Naive thymus-derived CD4-positive, alpha-beta T cell (primary cell): ENCODE measurements at regions of chr4 and their contacts with region 1.

Region 1: DNA sequence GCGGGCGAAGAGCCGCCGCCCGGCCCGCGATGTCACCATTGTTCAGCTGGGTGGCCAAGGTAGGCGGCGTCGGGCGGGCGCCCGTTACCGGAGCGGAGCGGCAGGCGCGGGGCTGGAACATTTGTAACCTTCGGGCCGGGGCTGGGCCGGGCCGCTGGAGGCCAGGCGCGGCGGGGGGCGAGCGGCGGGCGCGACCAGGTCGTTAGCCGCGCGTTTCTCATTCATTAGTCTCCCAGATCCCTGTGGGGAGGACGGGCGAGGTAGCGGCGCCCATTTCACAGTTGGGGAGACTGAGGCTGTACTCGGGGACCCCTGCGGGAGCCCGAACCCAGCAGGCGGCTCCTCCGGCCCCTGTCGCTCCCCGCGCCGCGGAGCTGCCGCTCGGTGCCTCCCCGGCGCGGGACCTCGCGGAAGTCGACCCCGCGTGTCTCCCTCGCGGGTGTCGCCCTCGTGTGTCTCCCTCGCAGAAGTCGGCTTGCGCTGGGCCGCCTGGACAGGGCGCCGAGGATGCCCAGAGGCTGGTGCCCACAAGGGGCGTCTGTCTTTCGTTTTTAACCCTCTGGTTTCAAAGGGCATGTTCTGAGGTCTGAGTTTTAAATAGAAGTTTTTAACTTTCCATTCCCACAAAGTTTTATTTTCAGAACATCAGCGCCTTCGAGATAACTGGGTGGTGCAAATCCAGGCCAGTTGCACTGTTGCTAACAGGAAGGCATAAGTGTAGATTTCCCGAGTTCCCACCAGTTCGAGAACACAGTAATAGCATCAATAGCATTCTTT is 17.5 kb downstream of the PTTG2 start:
- DNase-seq: peak; percentile 56 to 75 (median 70)
- ATAC-seq: peak; percentile 87
- H3K4me3 ChIP-seq: peak overlapping the region; percentile 69
- H3K4me3 Mint-ChIP-seq: peak overlapping the region; percentile 74 to 91 (median 84)
- H3K27ac ChIP-seq: peak overlapping the region; percentile 85
- H3K27ac Mint-ChIP-seq: peak overlapping the region; percentile 51 to 90 (median 78)
- H3K4me1 ChIP-seq: peaks cover 9 to 13% of the 10 kb centered on the region in 2 donors
- H3K4me1 Mint-ChIP-seq: peaks cover 14 to 40% (median 34%) of the 10 kb centered on the region in 7 donors
- H3K27me3 ChIP-seq: no peaks in the 10 kb centered on the region
- H3K27me3 Mint-ChIP-seq: no peaks in the 10 kb centered on the region

Region 2: DNA sequence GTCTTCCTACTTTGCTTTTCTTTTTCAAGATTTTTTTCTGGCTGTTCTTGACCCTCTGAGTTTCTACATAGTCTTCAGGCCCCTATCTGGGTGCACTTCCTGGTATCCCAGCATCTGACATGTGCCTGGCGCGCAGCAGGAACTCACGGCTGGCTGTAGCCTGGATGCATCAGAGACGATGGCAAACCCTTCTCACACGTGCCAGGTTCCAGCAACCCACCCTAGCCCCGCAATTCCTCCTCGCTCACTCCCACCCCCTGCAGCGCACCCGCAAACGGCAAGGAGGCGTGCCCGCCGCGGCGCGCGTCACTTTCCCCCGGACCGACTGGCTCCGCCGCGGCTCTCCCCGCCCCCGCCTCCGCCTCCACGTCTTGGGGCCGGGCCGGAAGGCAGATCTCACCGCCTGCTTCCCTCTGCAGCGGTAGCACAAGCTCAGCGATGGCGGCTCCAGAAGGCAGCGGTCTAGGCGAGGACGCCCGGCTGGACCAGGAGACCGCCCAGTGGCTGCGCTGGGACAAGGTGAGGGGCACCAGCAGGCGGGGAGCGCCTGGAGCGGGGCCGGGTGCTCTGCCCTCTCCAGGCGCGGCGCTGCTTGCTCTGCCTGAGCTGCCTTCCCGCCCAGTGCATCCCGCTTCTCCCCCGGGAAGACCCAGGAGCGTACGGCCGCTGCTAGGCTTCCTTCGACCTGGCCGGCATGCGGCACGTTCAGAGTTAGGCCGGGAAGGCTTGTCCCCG is 151.2 kb before region 1 on chr4 and contains the start of gene PGM2:
- CTCF ChIA-PET with region 1: no interaction called
- POLR2A ChIA-PET with region 1: interaction called, 7 read pairs
- intact Hi-C with region 1: loop called (anchors 1 kb)
- DNase-seq: peak; percentile 84 to 94 (median 90)
- ATAC-seq: peak; percentile 99
- H3K4me3 ChIP-seq: peak within 1 kb of the TSS; percentile 79
- H3K4me3 Mint-ChIP-seq: peak within 1 kb of the TSS; percentile 93 to 100 (median 98)
- H3K27ac ChIP-seq: peak within 1 kb of the TSS; percentile 80
- H3K27ac Mint-ChIP-seq: peak within 1 kb of the TSS; percentile 92 to 99 (median 96)
- H3K4me1 ChIP-seq: peaks cover 7 to 11% of the 10 kb centered on the region in 2 donors
- H3K4me1 Mint-ChIP-seq: peaks cover 34 to 70% (median 55%) of the 10 kb centered on the region in 7 donors
- H3K27me3 ChIP-seq: no peaks in the 10 kb centered on the region
- H3K27me3 Mint-ChIP-seq: peaks cover 0 to 5% (median 0%) of the 10 kb centered on the region in 5 donors
- total RNA-seq, gene PGM2: 14.4 to 35.2 (median 18.7) TPM

Region 3: DNA sequence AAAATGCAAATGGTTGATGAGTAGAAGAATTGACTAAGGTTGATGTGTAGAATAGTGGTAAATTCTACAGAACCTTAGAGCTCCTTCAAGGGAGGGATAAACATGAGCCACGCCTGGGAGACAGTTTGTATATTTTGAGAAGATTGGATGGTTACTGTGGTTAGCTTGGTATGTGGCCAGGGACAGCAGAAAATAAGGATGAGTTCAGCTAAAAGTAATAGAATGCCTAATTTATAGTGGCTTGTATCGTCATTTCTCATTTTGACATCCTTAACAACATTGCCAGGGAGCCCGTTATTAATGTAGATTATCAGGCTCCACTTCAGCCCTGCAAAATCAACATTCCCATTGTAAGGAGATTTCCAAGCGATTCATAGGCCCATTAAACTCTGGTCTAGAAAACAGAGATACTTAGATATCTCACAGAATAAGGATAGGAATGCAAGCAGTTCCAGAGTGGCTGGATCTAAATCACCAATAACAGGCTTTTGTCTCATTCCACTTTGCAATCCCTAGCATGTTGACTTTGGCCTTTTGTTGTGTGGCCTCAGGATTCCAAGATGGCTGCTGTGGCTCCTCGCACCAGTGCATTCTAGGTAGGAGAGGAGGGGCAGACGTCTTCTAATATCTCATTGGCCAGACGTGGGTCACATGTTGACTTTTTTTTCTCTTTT is 23.9 kb before region 1 on chr4:
- CTCF ChIA-PET with region 1: no interaction called
- POLR2A ChIA-PET with region 1: interaction called, 3 read pairs
- intact Hi-C with region 1: loop called in 1 of 2 experiments (anchors 1 kb)
- DNase-seq: no peak
- ATAC-seq: no peak
- H3K4me3 ChIP-seq: no peak overlapping the region
- H3K4me3 Mint-ChIP-seq: no peak overlapping the region
- H3K27ac ChIP-seq: no peak overlapping the region
- H3K27ac Mint-ChIP-seq: peak overlapping the region in 3 of 9 donors; percentile 19 to 74 (median 69)
- H3K4me1 ChIP-seq: no peaks in the 10 kb centered on the region
- H3K4me1 Mint-ChIP-seq: peaks cover 7 to 21% (median 10%) of the 10 kb centered on the region in 7 donors
- H3K27me3 ChIP-seq: no peaks in the 10 kb centered on the region
- H3K27me3 Mint-ChIP-seq: no peaks in the 10 kb centered on the region

Region 4: DNA sequence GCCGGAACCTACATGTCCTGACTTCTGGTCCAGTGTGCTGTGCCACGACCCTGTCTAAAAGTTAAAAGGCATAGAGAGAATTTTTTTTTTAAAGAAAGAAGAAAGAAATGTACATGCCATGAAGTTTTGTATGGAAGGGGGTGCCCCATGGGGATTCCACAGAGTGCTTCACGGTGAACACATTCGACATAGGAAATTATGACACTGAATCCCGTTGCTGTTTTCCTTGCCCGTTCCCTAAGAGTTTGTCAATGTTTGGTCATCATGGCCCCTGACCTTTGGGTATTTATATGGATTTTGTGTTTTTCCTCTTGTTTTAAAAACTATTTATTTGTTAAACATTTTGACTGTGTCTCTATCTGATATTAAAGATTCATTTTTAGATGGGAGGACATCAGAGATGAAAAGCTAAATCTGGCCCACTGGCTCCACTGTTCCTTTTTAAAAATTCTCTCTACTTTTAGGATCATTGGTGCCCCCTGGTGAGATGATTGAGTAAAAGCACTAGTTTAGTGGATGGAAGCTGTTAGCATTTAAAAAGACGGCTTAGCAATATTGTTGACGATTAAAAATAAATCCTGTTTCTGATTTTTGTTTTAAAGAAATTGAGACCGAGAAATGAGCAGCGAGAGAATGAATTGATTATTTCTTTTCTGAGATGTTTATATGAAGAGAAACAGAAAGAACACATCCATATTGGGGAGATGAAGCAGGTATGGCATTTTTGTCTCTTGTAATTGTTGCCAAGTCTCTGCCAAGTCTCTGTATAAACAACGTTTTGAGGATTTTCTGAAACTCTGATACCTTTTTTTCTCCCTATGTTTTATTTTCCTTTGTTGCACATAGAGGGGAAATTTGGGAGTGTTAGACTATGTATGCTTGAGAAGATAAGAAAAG is 57.6 kb after region 1 on chr4:
- CTCF ChIA-PET with region 1: no interaction called
- POLR2A ChIA-PET with region 1: no interaction called
- intact Hi-C with region 1: loop called (anchors 1 to 5 kb)
- DNase-seq: peak in 7 of 9 donors; percentile 29 to 66 (median 53)
- ATAC-seq: peak; percentile 68
- H3K4me3 ChIP-seq: no peak overlapping the region
- H3K4me3 Mint-ChIP-seq: no peak overlapping the region
- H3K27ac ChIP-seq: no peak overlapping the region
- H3K27ac Mint-ChIP-seq: no peak overlapping the region
- H3K4me1 ChIP-seq: no peaks in the 10 kb centered on the region
- H3K4me1 Mint-ChIP-seq: peaks cover 0 to 6% (median 0%) of the 10 kb centered on the region in 7 donors
- H3K27me3 ChIP-seq: no peaks in the 10 kb centered on the region
- H3K27me3 Mint-ChIP-seq: no peaks in the 10 kb centered on the region